ENCODE measurements at regions of chr2 and their contacts with region 1.

Region 1: DNA sequence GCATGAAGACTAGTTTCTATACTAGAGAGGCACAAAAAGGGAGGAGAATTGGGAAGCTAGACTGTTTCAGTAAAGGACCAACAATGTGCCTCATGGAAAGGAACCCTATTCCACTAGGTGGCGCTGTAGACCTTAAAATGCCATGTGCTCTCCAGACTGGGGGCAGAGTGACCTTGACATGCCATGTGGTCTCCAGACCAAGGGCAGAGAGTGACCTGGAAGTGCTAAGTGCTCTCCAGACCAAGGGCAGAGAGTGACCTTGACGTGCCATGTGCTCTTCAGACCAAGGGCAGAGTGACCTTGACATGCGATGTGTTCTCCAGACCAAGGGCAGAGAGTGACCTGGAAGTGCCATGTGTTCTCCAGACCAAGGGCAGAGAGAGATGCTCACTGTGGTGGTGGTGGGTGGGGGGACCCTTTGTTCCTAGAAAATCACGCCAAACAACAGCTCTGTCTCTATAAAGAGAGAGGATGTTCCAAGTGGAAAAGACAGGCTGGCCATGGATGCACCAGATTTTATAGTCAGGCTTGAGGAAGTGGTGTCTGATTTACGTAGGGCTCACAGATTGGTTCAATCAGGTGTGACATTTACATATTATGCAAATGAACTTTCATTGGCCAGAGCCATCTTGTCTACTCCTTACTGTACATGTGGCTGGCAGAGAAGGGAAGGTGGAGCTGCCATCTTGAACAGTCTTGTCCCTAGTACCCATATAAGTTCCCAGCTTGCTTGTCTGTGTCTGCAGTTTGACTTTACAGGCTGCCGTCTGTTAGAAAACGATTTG is 344.0 kb upstream of the DDX18 start:
- DNase-seq: no peak
- ATAC-seq: peak; percentile 73
- H3K4me3 ChIP-seq: no peak overlapping the region
- H3K27ac ChIP-seq: no peak overlapping the region
- H3K4me1 ChIP-seq: no peaks in the 10 kb centered on the region
- H3K27me3 ChIP-seq: no peaks in the 10 kb centered on the region
- CTCF ChIP-seq: peak; percentile 43 to 65 (median 55); a peak in 4 of 6 replicates
- EP300 ChIP-seq: no peak
- POLR2A ChIP-seq: no peak
- RAD21 ChIP-seq: peak; percentile 83

Region 2: DNA sequence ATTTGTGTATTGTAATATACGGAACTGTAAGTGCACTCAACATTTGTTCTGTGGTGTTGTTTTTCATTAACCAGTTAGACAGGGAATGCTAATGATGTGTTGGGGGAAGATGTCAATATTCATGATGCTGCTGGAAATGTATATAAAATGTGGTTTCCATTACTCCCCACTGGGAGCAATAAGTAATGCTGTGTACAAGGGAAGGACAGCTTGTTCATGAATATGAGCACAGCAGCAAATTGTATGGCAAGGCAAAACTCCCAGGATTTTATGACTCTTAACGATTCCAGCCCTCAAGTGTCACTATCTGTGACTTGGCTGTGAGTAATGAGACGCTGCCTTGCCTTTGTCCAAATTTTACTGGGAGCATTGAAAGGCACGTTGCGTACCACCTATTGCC is 31.6 kb after region 1 on chr2:
- CTCF ChIA-PET with region 1: no interaction called
- POLR2A ChIA-PET with region 1: no interaction called
- RAD21 ChIA-PET with region 1: no interaction called
- SMC1A ChIA-PET with region 1: no interaction called
- in situ Hi-C with region 1: no loop called
- intact Hi-C with region 1: no loop called
- DNase-seq: no peak
- ATAC-seq: no peak
- H3K4me3 ChIP-seq: no peak overlapping the region
- H3K27ac ChIP-seq: no peak overlapping the region
- H3K4me1 ChIP-seq: no peaks in the 10 kb centered on the region
- H3K27me3 ChIP-seq: no peaks in the 10 kb centered on the region
- CTCF ChIP-seq: no peak
- EP300 ChIP-seq: no peak
- POLR2A ChIP-seq: no peak
- RAD21 ChIP-seq: no peak

Region 3: DNA sequence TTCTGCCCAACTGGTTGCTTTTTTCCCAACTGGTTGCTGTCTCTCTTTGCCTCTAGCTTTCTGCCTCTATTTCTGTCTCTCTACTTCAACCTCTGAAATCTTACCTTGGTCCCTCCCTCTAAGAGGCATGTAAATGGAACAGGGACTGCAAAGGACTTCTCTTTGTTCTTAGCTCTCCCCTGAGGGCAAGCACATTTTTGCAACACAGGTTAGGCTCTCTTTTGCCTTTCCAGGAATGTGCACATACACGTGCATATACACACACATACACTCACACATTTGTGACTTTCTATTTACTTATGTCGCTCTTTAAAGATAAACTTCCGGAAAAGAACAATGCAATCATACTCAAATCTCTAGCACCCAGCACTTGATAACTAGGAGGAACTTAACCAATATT is 81.4 kb after region 1 on chr2:
- CTCF ChIA-PET with region 1: no interaction called
- POLR2A ChIA-PET with region 1: no interaction called
- RAD21 ChIA-PET with region 1: no interaction called
- SMC1A ChIA-PET with region 1: no interaction called
- in situ Hi-C with region 1: no loop called
- intact Hi-C with region 1: no loop called
- DNase-seq: no peak
- ATAC-seq: no peak
- H3K4me3 ChIP-seq: no peak overlapping the region
- H3K27ac ChIP-seq: no peak overlapping the region
- H3K4me1 ChIP-seq: no peaks in the 10 kb centered on the region
- H3K27me3 ChIP-seq: no peaks in the 10 kb centered on the region
- CTCF ChIP-seq: no peak
- EP300 ChIP-seq: no peak
- POLR2A ChIP-seq: no peak
- RAD21 ChIP-seq: no peak

Region 4: GRCh38 chr2:117679952-117680351 is 209.4 kb after region 1 on chr2:
- CTCF ChIA-PET with region 1: no interaction called
- POLR2A ChIA-PET with region 1: no interaction called
- RAD21 ChIA-PET with region 1: no interaction called
- SMC1A ChIA-PET with region 1: no interaction called
- in situ Hi-C with region 1: no loop called
- intact Hi-C with region 1: no loop called
- DNase-seq: no peak
- ATAC-seq: no peak
- H3K4me3 ChIP-seq: no peak overlapping the region
- H3K27ac ChIP-seq: no peak overlapping the region
- H3K4me1 ChIP-seq: no peaks in the 10 kb centered on the region
- H3K27me3 ChIP-seq: no peaks in the 10 kb centered on the region
- CTCF ChIP-seq: no peak
- EP300 ChIP-seq: no peak
- POLR2A ChIP-seq: no peak
- RAD21 ChIP-seq: no peak

Region 5: DNA sequence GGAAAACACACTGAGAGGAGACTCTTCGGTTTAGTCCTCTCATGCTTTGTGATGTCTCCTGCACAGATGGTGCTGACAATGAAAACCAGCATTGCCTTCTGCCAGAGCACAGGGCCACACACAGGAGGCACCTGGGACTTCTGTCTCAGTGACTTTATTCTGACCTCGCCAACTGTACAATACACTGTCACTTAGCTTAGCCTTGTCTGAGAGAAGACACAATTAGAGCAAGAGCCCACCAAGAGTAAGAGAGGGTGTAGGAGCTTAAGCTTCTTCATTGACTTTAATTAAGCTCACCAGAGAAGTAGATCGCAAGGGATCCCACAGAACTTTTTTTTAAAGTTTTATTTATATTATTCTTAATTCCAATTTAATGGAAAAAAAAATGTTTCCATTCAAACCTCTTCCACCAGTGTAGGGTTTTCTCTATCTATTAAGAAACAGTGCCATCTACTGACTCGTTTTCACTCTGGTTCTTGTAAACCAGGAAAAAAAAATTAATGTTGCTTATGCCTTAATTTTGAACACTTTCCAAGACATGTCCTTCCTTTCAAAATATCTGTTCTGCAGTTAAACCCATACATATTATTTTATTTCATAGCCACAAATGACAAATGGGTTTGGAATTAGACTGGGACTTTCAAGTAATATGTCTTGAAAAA is 301.6 kb after region 1 on chr2:
- CTCF ChIA-PET with region 1: interaction called, 16 read pairs
- POLR2A ChIA-PET with region 1: no interaction called
- RAD21 ChIA-PET with region 1: interaction called, 6 read pairs
- SMC1A ChIA-PET with region 1: interaction called, 5 read pairs
- in situ Hi-C with region 1: no loop called
- intact Hi-C with region 1: loop called (anchors 1 kb)
- DNase-seq: no peak
- ATAC-seq: peak; percentile 63; the same call in 2 of the 3 replicates
- H3K4me3 ChIP-seq: no peak overlapping the region
- H3K27ac ChIP-seq: no peak overlapping the region
- H3K4me1 ChIP-seq: no peaks in the 10 kb centered on the region
- H3K27me3 ChIP-seq: no peaks in the 10 kb centered on the region
- CTCF ChIP-seq: peak; percentile 33 to 60 (median 41); a peak in 5 of 6 replicates
- EP300 ChIP-seq: no peak
- POLR2A ChIP-seq: no peak
- RAD21 ChIP-seq: peak; percentile 66

Region 6: GRCh38 chr2:117785740-117786139 is 315.2 kb after region 1 on chr2:
- CTCF ChIA-PET with region 1: interaction called, 27 read pairs
- POLR2A ChIA-PET with region 1: no interaction called
- RAD21 ChIA-PET with region 1: interaction called, 5 read pairs
- SMC1A ChIA-PET with region 1: interaction called, 13 read pairs
- in situ Hi-C with region 1: loop called (anchors 10 kb)
- intact Hi-C with region 1: loop called (anchors 1 kb)
- DNase-seq: no peak
- ATAC-seq: peak; percentile 80
- H3K4me3 ChIP-seq: no peak overlapping the region
- H3K27ac ChIP-seq: no peak overlapping the region
- H3K4me1 ChIP-seq: no peaks in the 10 kb centered on the region
- H3K27me3 ChIP-seq: no peaks in the 10 kb centered on the region
- CTCF ChIP-seq: peak; percentile 56 to 67 (median 62)
- EP300 ChIP-seq: no peak
- POLR2A ChIP-seq: no peak
- RAD21 ChIP-seq: peak; percentile 76

Region 7: GRCh38 chr2:117794668-117795067 is 324.2 kb after region 1 on chr2:
- CTCF ChIA-PET with region 1: no interaction called
- POLR2A ChIA-PET with region 1: no interaction called
- RAD21 ChIA-PET with region 1: no interaction called
- SMC1A ChIA-PET with region 1: no interaction called
- in situ Hi-C with region 1: loop called (anchors 10 kb)
- intact Hi-C with region 1: no loop called
- DNase-seq: no peak
- ATAC-seq: no peak
- H3K4me3 ChIP-seq: no peak overlapping the region
- H3K27ac ChIP-seq: no peak overlapping the region
- H3K4me1 ChIP-seq: no peaks in the 10 kb centered on the region
- H3K27me3 ChIP-seq: no peaks in the 10 kb centered on the region
- CTCF ChIP-seq: no peak
- EP300 ChIP-seq: no peak
- POLR2A ChIP-seq: no peak
- RAD21 ChIP-seq: no peak